ENCODE measurements at regions of chr16 and their contacts with region 1.

Region 1: DNA sequence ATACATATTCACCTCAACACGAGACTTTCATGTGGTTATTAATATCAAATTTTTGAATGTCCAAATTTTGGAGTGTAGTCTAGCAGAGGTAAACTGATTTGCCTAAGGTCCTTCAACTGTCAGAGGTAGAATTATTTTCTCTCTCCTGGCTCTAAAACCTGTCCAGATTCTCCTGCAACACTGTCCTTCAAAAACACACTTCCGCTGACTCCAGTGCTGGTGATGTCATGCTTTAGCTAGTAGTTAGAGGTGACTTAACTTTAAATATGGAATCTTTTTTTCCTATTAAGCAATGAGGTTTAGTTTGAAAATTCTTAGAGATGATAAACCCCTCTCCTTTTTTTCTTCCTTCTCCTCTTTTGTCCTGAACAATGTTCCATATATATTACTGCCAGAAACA is 10.8 kb upstream of the CBLN1 start:
- DNase-seq: no peak
- H3K4me3 ChIP-seq: no peak overlapping the region
- H3K27ac ChIP-seq: no peak overlapping the region
- H3K4me1 ChIP-seq: no peaks in the 10 kb centered on the region
- H3K27me3 ChIP-seq: no peaks in the 10 kb centered on the region
- CTCF ChIP-seq: no peak
- POLR2A ChIP-seq: no peak

Region 2: DNA sequence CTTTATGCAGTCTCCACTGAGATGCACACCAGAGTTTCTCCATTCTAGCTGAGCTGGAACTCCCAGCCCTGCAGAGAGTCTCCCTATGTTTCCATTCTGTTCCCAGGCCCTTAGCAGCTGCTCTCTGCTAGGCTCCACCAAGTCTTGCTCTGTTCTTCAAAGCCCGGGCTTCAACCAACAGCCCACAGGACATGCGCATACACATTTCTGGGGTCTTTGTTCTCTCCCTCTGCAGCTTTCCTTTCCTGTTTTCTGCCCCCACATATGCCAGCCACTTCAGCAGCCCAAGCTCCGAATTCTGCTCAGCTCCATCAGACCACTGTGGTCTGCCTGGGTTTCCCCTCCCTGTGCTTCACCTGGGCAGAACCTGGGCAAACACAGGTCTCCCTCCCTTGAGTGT is 216.7 kb before region 1 on chr16:
- intact Hi-C with region 1: no loop called
- DNase-seq: no peak
- H3K4me3 ChIP-seq: no peak overlapping the region
- H3K27ac ChIP-seq: no peak overlapping the region
- H3K4me1 ChIP-seq: no peaks in the 10 kb centered on the region
- H3K27me3 ChIP-seq: no peaks in the 10 kb centered on the region
- CTCF ChIP-seq: no peak
- POLR2A ChIP-seq: no peak

Region 3: GRCh38 chr16:49150341-49150740 is 142.1 kb before region 1 on chr16:
- intact Hi-C with region 1: no loop called
- DNase-seq: peak; percentile 84
- H3K4me3 ChIP-seq: no peak overlapping the region
- H3K27ac ChIP-seq: no peak overlapping the region
- H3K4me1 ChIP-seq: no peaks in the 10 kb centered on the region
- H3K27me3 ChIP-seq: no peaks in the 10 kb centered on the region
- CTCF ChIP-seq: no peak
- POLR2A ChIP-seq: no peak

Region 4: DNA sequence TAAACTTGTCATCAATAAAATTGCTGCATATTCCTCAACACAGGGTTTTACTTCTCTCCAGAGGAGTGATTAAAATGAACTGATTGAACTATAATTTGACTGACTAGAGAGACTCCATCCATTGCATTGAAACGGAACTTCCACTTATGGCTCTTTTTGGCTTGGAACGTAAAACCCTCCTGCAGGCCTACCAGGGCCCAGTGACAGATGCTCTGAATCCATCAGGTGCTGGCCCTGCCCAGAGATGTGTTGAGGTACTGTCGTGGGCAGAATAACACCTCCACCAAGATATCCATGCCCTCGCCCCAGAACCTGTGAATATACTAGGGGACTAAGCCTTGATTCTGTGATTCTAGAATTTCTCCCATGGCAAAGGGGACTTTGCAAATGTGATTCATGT is 56.2 kb before region 1 on chr16:
- intact Hi-C with region 1: loop called (anchors 10 kb)
- DNase-seq: no peak
- H3K4me3 ChIP-seq: no peak overlapping the region
- H3K27ac ChIP-seq: no peak overlapping the region
- H3K4me1 ChIP-seq: no peaks in the 10 kb centered on the region
- H3K27me3 ChIP-seq: no peaks in the 10 kb centered on the region
- CTCF ChIP-seq: no peak
- POLR2A ChIP-seq: no peak

Region 5: DNA sequence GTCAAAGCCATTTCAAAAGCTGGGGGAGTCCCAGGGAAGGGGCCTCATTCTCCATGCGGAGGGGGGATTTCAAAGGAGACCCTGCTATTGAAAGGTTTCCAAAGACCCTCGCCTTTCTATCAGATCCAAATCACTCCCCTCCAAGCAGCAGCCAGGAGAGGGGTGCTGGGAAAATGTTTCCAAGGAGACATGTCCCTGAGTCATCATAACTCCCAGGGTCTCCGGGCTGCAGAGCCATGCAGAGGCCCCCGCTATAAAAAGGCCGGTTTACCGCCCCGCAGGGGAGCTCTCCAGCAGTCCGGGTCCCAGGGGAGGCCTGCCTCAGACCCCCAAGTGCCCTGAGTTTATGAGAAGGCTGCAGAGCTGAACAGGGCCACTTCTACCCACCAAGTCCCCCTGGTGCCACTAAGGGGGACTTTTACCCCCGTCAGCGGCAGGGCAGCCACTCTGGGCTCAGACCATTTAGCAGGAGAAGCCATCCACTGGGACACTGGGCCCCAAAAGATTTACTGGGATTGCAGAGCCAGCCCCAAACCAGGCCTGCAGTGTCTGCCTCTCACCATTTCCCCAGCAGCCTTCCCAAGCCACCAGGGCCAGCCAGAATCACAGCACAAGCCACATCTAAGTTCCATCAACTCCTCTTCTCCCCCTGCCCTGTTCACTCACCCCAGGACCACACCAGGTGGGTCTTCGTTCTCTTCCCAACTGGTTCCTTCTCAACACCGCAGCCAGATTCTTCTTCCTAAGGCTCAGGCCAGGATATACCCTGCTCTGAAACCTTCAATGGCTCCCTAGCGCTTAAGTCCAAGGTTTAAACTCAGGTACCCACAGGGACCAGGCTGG is 329.0 kb after region 1 on chr16:
- intact Hi-C with region 1: no loop called
- DNase-seq: no peak
- H3K4me3 ChIP-seq: no peak overlapping the region
- H3K27ac ChIP-seq: peak overlapping the region in 1 of 3 donors; percentile 61
- H3K4me1 ChIP-seq: peaks cover 8 to 15% of the 10 kb centered on the region in 2 donors
- H3K27me3 ChIP-seq: no peaks in the 10 kb centered on the region
- CTCF ChIP-seq: no peak
- POLR2A ChIP-seq: no peak